A549 (cell line): ENCODE measurements at regions of chr7 and their contacts with region 1.

Region 1: GRCh38 chr7:19747740-19748339 is 25.6 kb downstream of the TMEM196 start:
- DNase-seq: peak; percentile 33 to 53
- ATAC-seq: peak; percentile 59 to 82; a peak in 5 of 6 replicates
- H3K4me3 ChIP-seq: no peak overlapping the region
- H3K27ac ChIP-seq: no peak overlapping the region
- H3K4me1 ChIP-seq: no peaks in the 10 kb centered on the region
- CTCF ChIP-seq: peak; percentile 85
- EP300 ChIP-seq: no peak
- POLR2A ChIP-seq: no peak
- RAD21 ChIP-seq: peak; percentile 87 to 94

Region 2: DNA sequence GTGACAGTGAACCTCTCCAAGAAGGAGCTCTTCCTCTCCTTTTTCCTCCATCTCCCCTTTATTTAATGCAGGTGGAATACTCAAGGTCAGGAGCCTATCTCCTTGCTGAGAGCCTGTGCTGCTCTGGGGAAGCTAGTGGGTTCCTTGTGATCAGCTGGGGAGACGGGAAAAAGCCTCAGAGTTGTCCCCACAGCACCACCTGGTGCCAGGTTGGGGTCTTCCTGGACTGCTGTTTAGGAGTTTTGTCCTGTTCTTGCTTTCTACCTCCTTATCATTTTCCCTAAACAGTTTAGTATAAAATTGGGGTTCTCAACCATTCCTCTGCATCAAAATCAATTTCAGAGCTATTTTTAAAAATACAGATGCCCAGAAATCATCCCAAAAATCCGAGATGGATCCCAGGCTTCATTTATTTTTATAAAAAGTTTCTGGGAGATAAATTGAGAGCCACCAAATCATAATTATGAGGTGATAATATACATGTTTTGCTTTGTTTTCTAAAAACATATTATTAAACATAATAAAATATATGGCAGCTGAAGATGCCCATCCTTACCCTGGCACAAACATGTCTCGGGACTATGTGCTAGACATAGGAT is 425.0 kb after region 1 on chr7:
- CTCF ChIA-PET with region 1: interaction called, 67 read pairs
- POLR2A ChIA-PET with region 1: interaction called, 6 read pairs
- DNase-seq: peak; percentile 61 to 76
- ATAC-seq: peak; percentile 93 to 99
- H3K4me3 ChIP-seq: no peak overlapping the region
- H3K27ac ChIP-seq: peak overlapping the region in 1 of 2 experiments; percentile 57; a peak in 1 of 6 replicates
- H3K4me1 ChIP-seq: no peaks in the 10 kb centered on the region
- CTCF ChIP-seq: peak; percentile 81
- EP300 ChIP-seq: no peak
- POLR2A ChIP-seq: no peak
- RAD21 ChIP-seq: peak; percentile 94 to 96

Region 3: DNA sequence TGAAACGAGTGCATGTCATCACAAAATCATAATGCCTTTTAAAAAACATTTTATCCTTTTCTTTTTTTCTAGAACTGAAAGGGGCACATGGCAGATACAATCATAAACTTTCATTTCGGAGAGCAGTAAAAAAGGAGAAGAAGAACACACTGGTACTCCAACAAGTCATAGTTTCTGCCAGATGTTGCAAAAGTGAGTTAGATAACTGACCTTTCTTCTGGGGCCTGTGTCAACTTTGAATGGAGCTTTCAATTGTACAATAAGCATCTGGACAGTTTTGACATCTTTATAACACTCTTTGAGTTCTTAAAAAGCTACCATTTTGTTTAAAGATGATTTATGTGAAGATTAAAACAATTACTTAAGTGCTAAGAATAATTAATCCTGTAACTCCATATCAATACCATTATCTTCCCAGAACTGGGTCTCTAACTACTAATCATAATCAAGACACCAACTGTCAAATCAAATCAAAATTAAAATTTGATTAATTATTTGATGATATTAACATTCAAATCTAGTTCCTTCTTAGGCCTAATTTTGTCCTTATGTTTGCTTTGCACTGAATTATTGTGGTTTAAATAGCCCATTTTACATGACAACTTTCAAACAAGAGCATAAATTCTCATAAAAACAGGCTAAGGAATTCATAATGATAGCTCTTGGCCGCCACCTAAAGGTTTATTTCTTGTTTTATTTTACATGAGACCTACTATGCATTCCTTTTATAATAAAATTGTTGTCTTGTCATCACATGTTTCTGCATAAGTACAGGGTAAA is 563.3 kb after region 1 on chr7:
- CTCF ChIA-PET with region 1: interaction called, 21 read pairs
- POLR2A ChIA-PET with region 1: no interaction called
- DNase-seq: peak in 1 of 2 experiments; percentile 52
- ATAC-seq: peak in 1 of 2 experiments; percentile 47; a peak in 1 of 6 replicates
- H3K4me3 ChIP-seq: no peak overlapping the region
- H3K27ac ChIP-seq: no peak overlapping the region
- H3K4me1 ChIP-seq: peaks cover 8% of the 10 kb centered on the region; the same call in 1 of the 3 replicates
- CTCF ChIP-seq: peak; percentile 62
- EP300 ChIP-seq: no peak
- POLR2A ChIP-seq: no peak
- RAD21 ChIP-seq: peak; percentile 78 to 84

Region 4: GRCh38 chr7:20598459-20599309 is 850.8 kb after region 1 on chr7:
- CTCF ChIA-PET with region 1: interaction called, 43 read pairs
- POLR2A ChIA-PET with region 1: interaction called, 3 read pairs
- DNase-seq: peak; percentile 33 to 71
- ATAC-seq: peak; percentile 75 to 89; a peak in 4 of 6 replicates
- H3K4me3 ChIP-seq: no peak overlapping the region
- H3K27ac ChIP-seq: no peak overlapping the region
- H3K4me1 ChIP-seq: no peaks in the 10 kb centered on the region
- CTCF ChIP-seq: peak; percentile 93
- EP300 ChIP-seq: no peak
- POLR2A ChIP-seq: no peak
- RAD21 ChIP-seq: peak; percentile 91 to 94